Ascending aorta (tissue), 2 donors: ENCODE measurements at regions of chr10 and their contacts with region 1.

Region 1: GRCh38 chr10:15824498-15824897 is 35.8 kb downstream of the MINDY3 start:
- DNase-seq: no peak
- H3K4me3 ChIP-seq: no peak overlapping the region
- H3K27ac ChIP-seq: no peak overlapping the region
- H3K4me1 ChIP-seq: peaks cover 0 to 21% of the 10 kb centered on the region in 2 donors
- H3K27me3 ChIP-seq: no peaks in the 10 kb centered on the region
- CTCF ChIP-seq: peak; percentile 43 to 69 (median 64)

Region 2: DNA sequence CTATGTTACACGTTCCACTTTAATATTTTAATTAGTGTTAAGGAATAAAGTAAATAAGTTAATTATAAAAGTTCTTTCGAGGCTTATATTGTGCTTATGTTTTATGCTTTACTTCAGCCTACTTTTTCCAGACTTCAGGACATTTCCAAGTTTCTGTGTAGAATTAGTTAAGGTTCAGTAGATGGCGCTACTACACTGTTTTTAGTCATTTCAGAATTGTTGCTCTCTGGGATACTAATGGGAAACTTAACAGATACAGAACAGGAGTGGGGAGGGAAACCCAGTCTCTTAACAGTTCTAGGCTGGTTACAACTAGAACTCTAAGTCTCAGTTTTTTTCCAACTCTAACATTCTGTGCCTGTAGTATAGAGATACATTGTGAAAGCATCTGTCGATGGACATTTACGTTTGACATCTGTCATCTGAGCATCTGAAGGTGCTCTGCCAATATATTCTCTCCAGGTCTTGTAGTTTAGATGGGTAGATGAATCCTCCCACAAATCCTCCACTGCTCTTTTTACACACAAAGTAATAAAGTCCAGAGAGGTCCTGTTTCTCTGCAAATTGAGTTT is 396.6 kb before region 1 on chr10:
- intact Hi-C with region 1: loop called (anchors 2 kb)
- DNase-seq: no peak
- H3K4me3 ChIP-seq: no peak overlapping the region
- H3K27ac ChIP-seq: peak overlapping the region in 1 of 2 donors; percentile 17
- H3K4me1 ChIP-seq: peaks cover 0 to 8% of the 10 kb centered on the region in 2 donors
- H3K27me3 ChIP-seq: no peaks in the 10 kb centered on the region
- CTCF ChIP-seq: peak; percentile 54 to 64 (median 61)

Region 3: GRCh38 chr10:15585303-15585715 is 239.2 kb before region 1 on chr10:
- intact Hi-C with region 1: loop called (anchors 10 kb)
- DNase-seq: peak in 1 of 2 donors; percentile 84
- H3K4me3 ChIP-seq: no peak overlapping the region
- H3K27ac ChIP-seq: peak overlapping the region in 1 of 2 donors; percentile 31
- H3K4me1 ChIP-seq: peaks cover 0 to 3% of the 10 kb centered on the region in 2 donors
- H3K27me3 ChIP-seq: no peaks in the 10 kb centered on the region
- CTCF ChIP-seq: peak; percentile 72 to 81 (median 80)

Region 4: DNA sequence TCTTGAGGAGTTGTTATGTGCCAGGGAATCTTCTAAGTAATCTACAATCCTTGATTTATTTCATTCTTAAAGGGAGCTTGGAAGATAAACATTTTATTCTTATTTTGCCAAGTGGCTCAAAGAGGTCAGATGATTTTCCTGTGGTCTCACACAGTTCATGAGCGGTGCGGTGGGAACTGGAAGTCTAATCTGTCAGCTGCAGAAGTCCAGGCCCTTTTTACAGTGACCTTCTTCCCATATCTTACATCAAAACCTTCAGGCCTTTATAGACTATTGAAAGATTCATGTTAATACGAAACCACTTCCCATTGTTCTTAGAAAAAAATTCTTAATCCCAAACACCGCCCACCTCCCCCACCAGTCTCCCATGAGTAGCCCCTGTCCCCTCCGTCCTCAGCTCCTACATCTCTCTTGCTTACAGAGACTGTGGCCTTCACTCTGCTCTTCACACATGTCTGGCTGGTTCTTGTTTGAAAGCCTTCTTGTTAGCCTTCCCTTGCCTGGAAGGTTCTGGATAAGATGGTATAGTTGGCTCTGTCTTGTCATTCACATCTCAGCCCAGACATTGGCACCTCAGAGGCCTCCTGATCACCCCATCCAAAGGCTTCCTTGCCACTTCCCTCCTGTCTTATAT is 166.3 kb before region 1 on chr10:
- intact Hi-C with region 1: loop called (anchors 10 kb)
- DNase-seq: no peak
- H3K4me3 ChIP-seq: no peak overlapping the region
- H3K27ac ChIP-seq: peak overlapping the region in 1 of 2 donors; percentile 34
- H3K4me1 ChIP-seq: peaks cover 0 to 6% of the 10 kb centered on the region in 2 donors
- H3K27me3 ChIP-seq: no peaks in the 10 kb centered on the region
- CTCF ChIP-seq: no peak

Region 5: DNA sequence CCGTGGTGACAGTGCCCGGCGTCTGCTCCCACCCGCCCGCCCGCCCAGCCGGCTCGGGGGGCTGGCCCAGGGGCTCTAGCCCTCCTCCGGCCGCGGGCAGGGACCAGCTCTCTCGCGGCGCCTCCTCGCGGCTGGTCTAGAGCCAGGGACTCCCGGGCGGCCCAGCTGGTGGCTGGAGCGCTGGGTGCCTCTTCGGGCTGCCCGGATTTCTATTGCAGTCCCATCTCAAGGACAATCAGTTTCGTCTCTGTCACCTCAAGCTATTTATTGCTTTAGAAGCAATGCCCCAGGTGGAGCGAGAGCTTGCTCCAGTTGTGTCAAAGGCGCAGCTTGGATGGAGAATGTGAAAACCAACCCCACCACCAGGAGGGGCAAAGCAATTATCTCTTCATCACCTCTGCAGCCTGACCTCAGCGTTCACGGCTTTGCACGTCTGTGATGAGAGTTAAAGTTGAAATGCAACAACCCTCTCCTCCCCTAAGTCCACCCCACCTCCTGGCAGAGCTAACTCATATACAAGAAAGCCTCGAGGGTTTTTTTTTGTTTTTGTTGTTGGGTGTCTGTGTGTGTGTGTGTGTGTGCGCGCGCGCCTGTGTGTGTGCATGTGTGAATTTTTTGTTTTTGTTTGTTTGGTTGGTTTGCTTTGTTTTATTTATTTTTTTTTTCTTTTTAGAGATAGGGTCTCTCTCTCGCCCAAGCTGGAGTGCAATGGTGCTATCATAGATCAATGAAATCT is 104.4 kb before region 1 on chr10 and contains the start of gene ITGA8:
- intact Hi-C with region 1: loop called (anchors 1 kb)
- DNase-seq: peak in 1 of 2 donors; percentile 84
- H3K4me3 ChIP-seq: peak within 1 kb of the TSS; percentile 78 to 96
- H3K27ac ChIP-seq: peak within 1 kb of the TSS; percentile 91 to 95
- H3K4me1 ChIP-seq: peaks cover 7 to 28% of the 10 kb centered on the region in 2 donors
- H3K27me3 ChIP-seq: no peaks in the 10 kb centered on the region
- CTCF ChIP-seq: peak; percentile 60 to 68 (median 62)
- total RNA-seq, gene ITGA8: 231 TPM

Region 6: GRCh38 chr10:15789793-15790525 is 34.5 kb before region 1 on chr10:
- intact Hi-C with region 1: loop called (anchors 5 kb)
- DNase-seq: no peak
- H3K4me3 ChIP-seq: no peak overlapping the region
- H3K27ac ChIP-seq: peak overlapping the region; percentile 85 to 87
- H3K4me1 ChIP-seq: peaks cover 5 to 74% of the 10 kb centered on the region in 2 donors
- H3K27me3 ChIP-seq: no peaks in the 10 kb centered on the region
- CTCF ChIP-seq: no peak

Region 7: DNA sequence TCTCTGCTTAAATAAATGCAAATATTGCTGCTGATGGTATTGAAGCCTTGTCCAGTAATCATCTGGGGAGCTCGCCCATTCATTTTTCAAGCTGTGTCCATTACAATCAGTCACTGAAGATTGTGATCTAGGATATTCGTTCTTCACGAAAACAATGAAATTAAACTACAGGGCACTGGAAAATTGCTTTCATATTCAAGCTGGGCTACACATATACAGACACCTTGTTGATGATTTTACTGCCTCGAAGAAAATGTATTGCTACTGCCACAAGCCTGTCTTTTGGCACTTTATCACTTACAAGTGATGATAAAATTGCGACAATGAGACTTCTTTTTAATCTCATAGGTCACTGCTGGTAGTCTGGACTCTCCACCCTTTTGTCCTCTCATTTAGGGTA is 135.8 kb after region 1 on chr10:
- intact Hi-C with region 1: no loop called
- DNase-seq: no peak
- H3K4me3 ChIP-seq: no peak overlapping the region
- H3K27ac ChIP-seq: no peak overlapping the region
- H3K4me1 ChIP-seq: no peaks in the 10 kb centered on the region
- H3K27me3 ChIP-seq: no peaks in the 10 kb centered on the region
- CTCF ChIP-seq: no peak